AG04450 (cell line): ENCODE measurements at regions of chr4 and their contacts with region 1.

Region 1: GRCh38 chr4:151948351-151949016 is 187.7 kb upstream of the GATB start:
- DNase-seq: no peak
- H3K4me3 ChIP-seq: no peak overlapping the region
- H3K27ac ChIP-seq: no peak overlapping the region
- H3K27me3 ChIP-seq: no peaks in the 10 kb centered on the region
- CTCF ChIP-seq: no peak

Region 2: GRCh38 chr4:152269448-152270191 is 321.1 kb after region 1 on chr4:
- CTCF ChIA-PET with region 1: no interaction called
- POLR2A ChIA-PET with region 1: interaction called, 12 read pairs
- DNase-seq: no peak
- H3K4me3 ChIP-seq: no peak overlapping the region
- H3K27ac ChIP-seq: no peak overlapping the region
- H3K27me3 ChIP-seq: no peaks in the 10 kb centered on the region
- CTCF ChIP-seq: no peak